ENCODE measurements at regions of chr4 and their contacts with region 1.

Region 1: DNA sequence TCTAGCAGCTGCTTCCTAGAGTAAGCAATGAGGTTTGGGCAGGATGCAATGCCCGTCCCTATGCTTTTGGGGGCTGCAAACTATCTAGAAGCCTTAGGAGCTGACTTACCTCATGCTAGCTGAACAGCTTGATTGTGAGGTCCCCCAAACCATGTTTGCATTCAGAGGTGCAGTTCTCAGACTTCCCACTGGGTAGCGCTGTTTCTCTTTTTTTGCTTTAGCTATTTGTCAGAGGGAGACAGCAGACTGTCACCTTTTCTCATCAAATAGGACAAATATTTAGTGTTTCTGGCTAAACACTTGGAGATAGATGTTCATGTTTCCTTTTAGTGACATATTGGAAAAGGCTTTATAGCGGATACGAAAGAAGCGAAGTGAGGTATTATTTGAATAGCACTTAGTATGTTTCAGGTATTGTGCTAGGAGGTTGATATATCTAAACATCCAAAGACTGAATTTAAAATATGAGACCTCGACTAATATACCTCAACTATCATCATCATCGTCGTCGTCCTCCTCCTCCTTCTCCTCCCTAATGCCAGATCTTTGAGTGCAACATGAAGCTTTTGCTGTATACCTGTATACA is 18.7 kb upstream of the TMEM192 start:
- DNase-seq: no peak
- ATAC-seq: peak; percentile 85

Region 2: DNA sequence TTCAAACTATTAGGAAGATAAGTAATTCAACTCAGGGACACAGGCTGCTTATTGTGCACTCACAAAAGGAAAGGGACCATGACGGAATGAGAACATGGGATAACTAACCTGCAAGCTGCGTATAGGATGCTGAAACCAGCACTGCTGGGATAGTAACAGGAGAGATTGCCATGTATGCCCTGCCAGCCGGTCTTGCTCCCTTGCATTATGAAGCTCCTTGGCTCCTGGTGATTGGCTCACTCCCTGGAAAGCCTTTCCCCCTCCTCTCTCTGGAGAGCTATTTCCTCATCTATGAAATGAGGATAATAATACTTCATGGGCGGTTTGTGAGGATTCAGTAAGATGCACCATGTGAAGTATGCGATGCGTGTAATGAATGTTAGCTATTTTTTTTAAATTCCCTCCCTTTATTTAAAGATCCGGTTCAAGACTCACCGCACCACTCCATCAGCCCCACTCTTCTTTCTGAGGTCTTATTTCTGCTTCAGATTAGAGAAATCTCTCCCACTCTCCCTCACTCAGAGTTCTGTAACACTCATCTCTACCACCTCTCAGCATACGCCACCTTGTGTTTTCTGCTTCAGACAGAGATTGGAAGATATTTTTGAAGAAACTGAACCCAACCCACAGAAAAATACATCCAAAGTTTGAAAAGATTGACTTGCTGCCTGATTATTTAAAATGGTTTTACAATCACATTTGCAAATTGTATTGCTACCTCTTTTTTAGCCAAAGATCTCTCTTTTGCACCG is 214.5 kb after region 1 on chr4:
- intact Hi-C with region 1: loop called (anchors 5 kb)
- DNase-seq: no peak
- ATAC-seq: no peak

Region 3: DNA sequence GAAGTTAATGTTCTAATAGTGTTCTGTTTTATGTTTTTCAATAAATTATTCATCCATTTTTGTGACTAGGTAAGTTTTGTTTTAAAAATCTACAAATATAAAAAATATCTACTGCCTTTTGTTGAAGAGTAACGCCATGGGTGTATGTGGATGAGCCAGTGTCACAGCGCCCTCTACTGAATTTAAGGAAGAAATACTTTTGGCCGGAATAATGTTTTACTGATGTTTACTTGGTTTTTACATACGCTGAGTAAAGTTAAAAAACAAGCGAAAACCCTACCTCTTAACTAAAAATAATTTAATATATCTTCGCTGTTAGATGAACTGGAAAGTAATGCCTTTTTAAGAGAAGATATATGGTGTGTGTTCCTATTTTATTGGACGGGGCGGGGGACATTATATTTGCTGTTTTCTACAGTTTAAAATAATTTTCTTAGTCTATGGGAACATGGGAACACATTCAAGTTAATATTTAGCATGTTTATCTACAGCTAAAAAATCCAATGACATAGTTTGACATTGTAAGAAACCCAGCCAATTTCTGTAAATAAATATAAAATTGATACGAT is 333.6 kb after region 1 on chr4:
- intact Hi-C with region 1: loop called (anchors 5 kb)
- DNase-seq: no peak
- ATAC-seq: peak; percentile 73

Measured in Right ventricle myocardium superior (tissue), 1 donor.